Vagina (tissue), 2 donors: ENCODE measurements at regions of chr20 and their contacts with region 1.

Region 1: DNA sequence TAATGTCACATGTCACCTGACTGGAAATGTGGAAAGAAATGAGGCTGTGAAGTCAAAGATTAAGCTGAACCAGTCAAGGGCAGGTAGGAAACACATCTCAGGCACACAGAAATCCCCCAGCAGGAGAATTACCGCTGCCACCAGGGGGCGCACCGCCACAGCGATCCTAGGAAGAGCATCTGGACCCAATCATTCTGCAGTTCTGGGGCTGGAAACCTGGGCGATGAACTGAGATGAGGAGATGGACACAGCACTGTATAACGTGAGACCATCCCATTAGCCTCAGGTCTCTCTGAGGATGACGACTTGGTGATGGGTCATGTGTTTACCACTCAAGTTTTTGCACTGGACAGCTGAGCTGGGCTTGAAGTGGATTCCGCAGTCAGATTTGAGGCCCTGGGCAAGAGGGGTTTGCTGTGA is 6.5 kb upstream of the SLC24A3 start:
- DNase-seq: no peak
- H3K4me3 ChIP-seq: no peak overlapping the region
- H3K27ac ChIP-seq: no peak overlapping the region
- H3K4me1 ChIP-seq: peaks cover 9% of the 10 kb centered on the region
- H3K27me3 ChIP-seq: no peaks in the 10 kb centered on the region
- CTCF ChIP-seq: peak; percentile 60 to 88 (median 70)
- POLR2A ChIP-seq: no peak

Region 2: GRCh38 chr20:19473922-19474286 is 267.9 kb after region 1 on chr20:
- intact Hi-C with region 1: no loop called
- DNase-seq: no peak
- H3K4me3 ChIP-seq: no peak overlapping the region
- H3K27ac ChIP-seq: no peak overlapping the region
- H3K4me1 ChIP-seq: no peaks in the 10 kb centered on the region
- H3K27me3 ChIP-seq: no peaks in the 10 kb centered on the region
- CTCF ChIP-seq: no peak
- POLR2A ChIP-seq: no peak

Region 3: DNA sequence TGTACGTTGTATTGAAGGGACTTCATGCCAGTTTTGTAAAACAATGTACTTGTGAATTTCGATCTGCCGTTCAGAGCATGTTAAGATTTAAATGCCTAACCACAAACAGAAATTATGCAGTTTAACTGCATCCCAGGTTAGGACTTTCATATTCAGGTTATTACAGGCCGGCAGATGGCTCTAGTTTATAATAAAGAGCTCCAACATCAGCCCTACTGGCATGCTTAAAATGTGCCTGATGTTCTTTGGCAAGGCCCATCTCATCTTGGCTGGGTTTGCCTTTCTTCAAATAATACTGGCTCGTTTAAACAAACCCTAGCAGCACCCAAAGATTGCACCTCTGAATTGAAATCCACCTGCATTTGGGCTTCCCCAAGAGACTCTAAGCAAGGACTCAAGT is 382.7 kb after region 1 on chr20:
- intact Hi-C with region 1: loop called (anchors 5 kb)
- DNase-seq: no peak
- H3K4me3 ChIP-seq: no peak overlapping the region
- H3K27ac ChIP-seq: no peak overlapping the region
- H3K4me1 ChIP-seq: peaks cover 9% of the 10 kb centered on the region
- H3K27me3 ChIP-seq: no peaks in the 10 kb centered on the region
- CTCF ChIP-seq: no peak
- POLR2A ChIP-seq: no peak

Region 4: GRCh38 chr20:19661717-19662636 is 456.0 kb after region 1 on chr20:
- intact Hi-C with region 1: loop called (anchors 5 kb)
- DNase-seq: no peak
- H3K4me3 ChIP-seq: no peak overlapping the region
- H3K27ac ChIP-seq: no peak overlapping the region
- H3K4me1 ChIP-seq: no peaks in the 10 kb centered on the region
- H3K27me3 ChIP-seq: no peaks in the 10 kb centered on the region
- CTCF ChIP-seq: peak; percentile 83 to 93 (median 84)
- POLR2A ChIP-seq: no peak